ENCODE measurements at regions of chr9 and their contacts with region 1.

Region 1: DNA sequence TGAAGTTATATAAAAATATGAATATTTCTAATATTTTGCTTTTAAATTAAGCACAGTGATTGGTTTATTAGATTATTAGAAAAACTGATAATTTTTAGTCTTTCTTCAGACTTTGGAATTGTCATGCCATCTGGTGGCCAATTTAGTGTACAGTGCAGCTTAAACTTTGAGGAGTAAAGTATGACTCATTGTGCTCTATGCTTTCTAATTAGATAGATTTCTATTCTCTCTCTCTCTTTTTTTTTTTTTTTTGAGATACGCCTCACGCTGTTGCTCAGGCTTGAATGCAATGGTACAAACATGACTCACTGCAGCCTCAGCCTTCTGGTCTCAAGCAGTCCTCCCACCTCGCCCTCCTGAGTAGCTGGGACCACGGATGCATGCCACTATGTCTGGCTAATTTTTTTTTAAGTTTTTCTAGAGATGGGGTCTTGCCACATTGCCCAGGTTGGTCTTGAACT is 42.1 kb upstream of the GPR21 start:
- DNase-seq: peak in 5 of 9 experiments; percentile 12 to 65 (median 50)
- ATAC-seq: peak; percentile 86
- H3K4me3 ChIP-seq: no peak overlapping the region
- H3K4me3 Mint-ChIP-seq: no peak overlapping the region
- H3K27ac ChIP-seq: no peak overlapping the region
- H3K27ac Mint-ChIP-seq: no peak overlapping the region
- H3K4me1 ChIP-seq: no peaks in the 10 kb centered on the region
- H3K4me1 Mint-ChIP-seq: peaks cover 2% of the 10 kb centered on the region
- H3K27me3 ChIP-seq: no peaks in the 10 kb centered on the region
- H3K27me3 Mint-ChIP-seq: no peaks in the 10 kb centered on the region
- CTCF ChIP-seq: peak; percentile 71

Region 2: GRCh38 chr9:122131401-122132001 is 859.9 kb before region 1 on chr9:
- CTCF ChIA-PET with region 1: no interaction called
- POLR2A ChIA-PET with region 1: no interaction called
- intact Hi-C with region 1: no loop called
- DNase-seq: no peak
- ATAC-seq: no peak
- H3K4me3 ChIP-seq: no peak overlapping the region
- H3K4me3 Mint-ChIP-seq: no peak overlapping the region
- H3K27ac ChIP-seq: no peak overlapping the region
- H3K27ac Mint-ChIP-seq: no peak overlapping the region
- H3K4me1 ChIP-seq: peaks cover 3% of the 10 kb centered on the region
- H3K4me1 Mint-ChIP-seq: peaks cover 6% of the 10 kb centered on the region
- H3K27me3 ChIP-seq: peaks cover 0 to 5% of the 10 kb centered on the region in 2 experiments
- H3K27me3 Mint-ChIP-seq: peaks cover 12% of the 10 kb centered on the region
- CTCF ChIP-seq: no peak

Region 3: GRCh38 chr9:122464633-122465567 is 526.5 kb before region 1 on chr9:
- CTCF ChIA-PET with region 1: interaction called, 13 read pairs
- POLR2A ChIA-PET with region 1: no interaction called
- intact Hi-C with region 1: loop called in 1 of 2 experiments (anchors 1 kb)
- DNase-seq: peak; percentile 37 to 79 (median 64)
- ATAC-seq: peak; percentile 78
- H3K4me3 ChIP-seq: peak overlapping the region; percentile 47 to 49
- H3K4me3 Mint-ChIP-seq: peak overlapping the region; percentile 89
- H3K27ac ChIP-seq: peak overlapping the region; percentile 39 to 58
- H3K27ac Mint-ChIP-seq: peak overlapping the region; percentile 87
- H3K4me1 ChIP-seq: peaks cover 5% of the 10 kb centered on the region
- H3K4me1 Mint-ChIP-seq: peaks cover 10% of the 10 kb centered on the region
- H3K27me3 ChIP-seq: no peaks in the 10 kb centered on the region
- H3K27me3 Mint-ChIP-seq: peaks cover 28% of the 10 kb centered on the region
- CTCF ChIP-seq: peak; percentile 81

Region 4: DNA sequence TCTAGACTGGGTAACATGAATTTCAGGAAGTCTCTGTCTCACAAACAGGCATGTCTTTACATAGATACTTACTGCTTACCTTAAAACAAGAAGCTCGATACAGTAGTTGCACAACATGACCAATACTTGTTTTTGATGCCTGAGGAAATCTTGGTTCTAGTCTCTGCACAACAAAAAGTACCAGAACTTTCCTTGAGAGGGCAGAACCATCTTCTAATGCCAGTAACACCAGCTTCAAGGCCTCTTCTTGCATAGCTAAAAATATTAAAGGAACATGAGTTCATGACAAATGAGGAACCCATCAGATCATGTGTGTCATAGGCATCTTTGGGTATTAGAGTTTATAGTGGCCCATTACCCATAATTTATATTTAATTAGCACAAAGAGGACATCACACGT is 108.3 kb before region 1 on chr9:
- CTCF ChIA-PET with region 1: no interaction called
- POLR2A ChIA-PET with region 1: no interaction called
- intact Hi-C with region 1: loop called in 1 of 2 experiments (anchors 5 kb)
- DNase-seq: no peak
- ATAC-seq: no peak
- H3K4me3 ChIP-seq: no peak overlapping the region
- H3K4me3 Mint-ChIP-seq: no peak overlapping the region
- H3K27ac ChIP-seq: no peak overlapping the region
- H3K27ac Mint-ChIP-seq: no peak overlapping the region
- H3K4me1 ChIP-seq: no peaks in the 10 kb centered on the region
- H3K4me1 Mint-ChIP-seq: peaks cover 6% of the 10 kb centered on the region
- H3K27me3 ChIP-seq: no peaks in the 10 kb centered on the region
- H3K27me3 Mint-ChIP-seq: no peaks in the 10 kb centered on the region
- CTCF ChIP-seq: no peak

Region 5: DNA sequence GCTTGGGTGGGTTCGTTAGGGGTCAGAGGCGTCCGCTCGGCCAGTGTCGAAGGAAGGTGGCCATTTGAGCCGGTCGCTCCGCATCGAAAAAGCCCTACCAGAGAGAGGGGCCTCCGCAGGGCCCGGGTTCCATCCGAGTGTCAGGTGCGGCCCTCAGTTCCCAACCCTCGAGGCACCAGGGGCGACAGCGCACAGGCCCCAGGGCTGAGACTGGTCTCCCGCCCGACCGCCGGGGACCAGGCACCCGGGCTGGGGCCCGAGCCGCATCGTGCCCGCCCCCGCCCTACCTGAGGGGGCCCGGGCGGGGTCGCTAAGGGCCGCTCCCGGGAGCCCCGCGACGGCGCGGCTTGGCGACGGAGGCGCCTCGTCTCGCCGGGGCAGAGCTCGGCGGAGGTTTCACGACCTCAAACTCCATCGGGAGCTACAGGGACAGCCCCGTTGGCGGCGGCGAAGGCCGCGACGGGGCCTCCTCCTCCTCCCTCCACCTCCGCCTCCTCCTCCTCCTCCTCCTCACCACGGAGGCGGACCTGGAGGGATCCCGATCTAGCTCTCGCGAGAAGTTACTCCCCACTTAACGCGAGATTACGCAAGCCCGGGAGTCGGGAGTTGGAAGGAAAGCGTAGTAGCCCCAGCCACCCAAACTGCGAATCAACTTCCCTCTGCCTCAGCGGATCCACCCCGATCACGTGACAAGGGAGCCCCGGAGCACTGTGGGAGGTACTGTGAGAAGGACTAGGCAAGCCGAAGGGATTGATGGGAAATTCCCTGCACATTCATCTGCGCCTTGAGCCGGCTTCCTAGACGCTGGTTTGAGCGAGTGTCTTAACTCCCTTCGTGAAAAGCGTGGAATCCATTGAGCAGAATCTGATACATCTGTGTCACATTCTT is 86.3 kb before region 1 on chr9 and contains the start of gene RC3H2:
- CTCF ChIA-PET with region 1: no interaction called
- POLR2A ChIA-PET with region 1: no interaction called
- intact Hi-C with region 1: loop called (anchors 2 to 5 kb)
- DNase-seq: peak; percentile 92 to 100 (median 97)
- ATAC-seq: peak; percentile 91
- H3K4me3 ChIP-seq: peak within 1 kb of the TSS; percentile 66 to 92
- H3K4me3 Mint-ChIP-seq: peak within 1 kb of the TSS; percentile 94
- H3K27ac ChIP-seq: peak within 1 kb of the TSS; percentile 67 to 94
- H3K27ac Mint-ChIP-seq: peak within 1 kb of the TSS; percentile 98
- H3K4me1 ChIP-seq: peaks cover 32% of the 10 kb centered on the region
- H3K4me1 Mint-ChIP-seq: peaks cover 26% of the 10 kb centered on the region
- H3K27me3 ChIP-seq: no peaks in the 10 kb centered on the region
- H3K27me3 Mint-ChIP-seq: no peaks in the 10 kb centered on the region
- CTCF ChIP-seq: no peak
- total RNA-seq, gene RC3H2: 77.6 to 79.5 TPM

Region 6: DNA sequence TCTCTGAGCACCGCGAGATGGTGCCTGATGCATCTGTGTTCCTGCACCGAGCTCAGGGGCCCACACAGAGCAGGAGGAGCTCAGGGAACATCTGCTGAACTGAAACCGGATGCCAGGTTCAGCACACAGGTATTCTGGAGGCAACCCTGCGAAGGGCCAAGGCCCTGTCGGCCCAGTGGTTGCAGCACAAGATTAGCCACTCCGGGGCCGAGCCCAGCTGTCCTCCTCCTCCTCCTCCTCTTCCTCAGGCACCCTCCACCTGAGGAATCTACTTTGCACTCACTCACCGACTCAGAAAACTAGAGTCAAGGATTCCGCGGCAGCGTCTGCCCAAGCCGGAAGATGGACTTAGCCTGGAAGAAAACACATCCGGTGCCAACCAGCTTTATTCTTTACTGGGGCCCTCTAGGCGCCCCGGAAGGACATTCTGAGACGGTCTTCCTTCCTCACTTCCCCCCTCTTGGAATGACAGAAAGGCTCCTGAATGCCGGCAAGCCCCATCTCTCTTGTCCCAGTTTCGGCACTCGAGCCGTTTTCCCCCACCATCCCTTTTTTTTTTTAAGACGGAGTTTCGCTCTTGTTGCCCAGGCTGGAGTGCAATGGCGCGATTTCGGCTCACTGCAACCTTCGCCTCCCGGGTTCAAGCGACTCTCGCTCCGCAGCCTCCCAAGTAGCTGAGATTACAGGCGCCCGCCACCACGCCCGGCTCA is 78.3 kb before region 1 on chr9 and contains the start of gene ZBTB6:
- CTCF ChIA-PET with region 1: interaction called, 3 read pairs
- POLR2A ChIA-PET with region 1: no interaction called
- intact Hi-C with region 1: loop called (anchors 1 to 5 kb)
- DNase-seq: peak; percentile 50 to 90 (median 68)
- ATAC-seq: peak; percentile 97
- H3K4me3 ChIP-seq: peak within 1 kb of the TSS; percentile 80 to 86
- H3K4me3 Mint-ChIP-seq: peak within 1 kb of the TSS; percentile 98
- H3K27ac ChIP-seq: peak within 1 kb of the TSS; percentile 70 to 92
- H3K27ac Mint-ChIP-seq: peak within 1 kb of the TSS; percentile 94
- H3K4me1 ChIP-seq: peaks cover 15% of the 10 kb centered on the region
- H3K4me1 Mint-ChIP-seq: peaks cover 36% of the 10 kb centered on the region
- H3K27me3 ChIP-seq: no peaks in the 10 kb centered on the region
- H3K27me3 Mint-ChIP-seq: no peaks in the 10 kb centered on the region
- CTCF ChIP-seq: no peak
- total RNA-seq, gene ZBTB6: 3.6 to 3.7 TPM

Measured in CD8-positive, alpha-beta T cell (primary cell).